Sigmoid colon (tissue), 7 donors: ENCODE measurements at regions of chr7 and their contacts with region 1.

Region 1: GRCh38 chr7:35624299-35625186 is 70.4 kb downstream of the HERPUD2 start:
- DNase-seq: no peak
- H3K4me3 ChIP-seq: no peak overlapping the region
- H3K27ac ChIP-seq: no peak overlapping the region
- H3K4me1 ChIP-seq: peaks cover 0 to 10% (median 4%) of the 10 kb centered on the region in 4 donors
- H3K27me3 ChIP-seq: no peaks in the 10 kb centered on the region
- CTCF ChIP-seq: peak; percentile 48 to 80 (median 62)
- EP300 ChIP-seq: no peak
- POLR2A ChIP-seq: no peak

Region 2: GRCh38 chr7:35424869-35425495 is 199.6 kb before region 1 on chr7:
- intact Hi-C with region 1: loop called (anchors 10 kb)
- DNase-seq: no peak
- H3K4me3 ChIP-seq: no peak overlapping the region
- H3K27ac ChIP-seq: no peak overlapping the region
- H3K4me1 ChIP-seq: peaks cover 0 to 3% (median 0%) of the 10 kb centered on the region in 4 donors
- H3K27me3 ChIP-seq: no peaks in the 10 kb centered on the region
- CTCF ChIP-seq: peak; percentile 11 to 55 (median 42)
- EP300 ChIP-seq: no peak
- POLR2A ChIP-seq: no peak

Region 3: GRCh38 chr7:35446091-35446490 is 178.5 kb before region 1 on chr7:
- intact Hi-C with region 1: no loop called
- DNase-seq: no peak
- H3K4me3 ChIP-seq: no peak overlapping the region
- H3K27ac ChIP-seq: no peak overlapping the region
- H3K4me1 ChIP-seq: no peaks in the 10 kb centered on the region
- H3K27me3 ChIP-seq: no peaks in the 10 kb centered on the region
- CTCF ChIP-seq: no peak
- EP300 ChIP-seq: no peak
- POLR2A ChIP-seq: no peak

Region 4: DNA sequence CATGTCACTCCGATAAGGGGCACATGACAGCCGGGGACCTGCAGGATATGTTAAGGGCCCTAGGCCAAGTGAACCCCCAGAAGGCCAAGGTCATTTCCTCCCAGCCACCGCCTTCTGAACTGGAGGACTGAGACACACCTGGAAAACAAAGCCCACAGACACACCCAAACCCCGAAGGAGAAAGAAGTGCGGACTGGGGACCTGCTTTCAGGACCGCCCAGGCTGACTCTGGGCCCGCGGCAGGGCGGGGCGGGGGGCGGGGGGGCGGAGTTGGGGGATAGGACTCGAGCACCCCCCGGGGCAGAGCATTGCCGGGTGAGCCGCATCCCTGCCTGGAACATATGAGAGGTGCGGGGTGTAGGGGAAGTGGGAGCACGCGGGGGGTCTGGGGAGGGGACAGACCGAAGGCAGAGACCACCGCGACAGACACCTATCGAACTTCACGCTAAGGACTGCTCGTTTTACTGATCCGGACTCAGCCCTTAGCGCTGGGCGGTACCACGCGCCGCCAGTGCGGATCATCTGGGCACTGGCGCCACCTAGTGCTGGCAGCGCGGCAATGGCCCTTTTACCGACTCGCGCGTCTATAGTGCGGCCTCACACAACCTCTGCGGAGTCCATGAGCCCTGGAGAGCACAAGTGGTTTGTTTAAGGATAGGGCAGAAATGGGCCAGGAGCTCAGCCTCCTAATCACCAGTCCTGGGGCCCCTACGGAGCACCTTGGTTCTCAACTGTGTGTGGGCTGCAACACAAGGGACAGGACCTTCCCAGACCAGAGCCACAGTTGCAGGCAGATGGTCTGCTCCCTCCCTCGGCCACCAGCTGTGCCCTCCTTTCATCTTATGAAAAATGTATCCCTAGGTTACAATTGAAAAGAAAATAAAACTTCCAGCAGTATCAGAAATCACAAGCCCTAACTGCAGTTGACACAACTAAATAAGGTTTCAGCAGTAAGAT is 87.2 kb before region 1 on chr7:
- intact Hi-C with region 1: loop called (anchors 10 kb)
- DNase-seq: peak; percentile 84
- H3K4me3 ChIP-seq: peak overlapping the region; percentile 18 to 47 (median 40)
- H3K27ac ChIP-seq: no peak overlapping the region
- H3K4me1 ChIP-seq: peaks cover 0 to 7% (median 3%) of the 10 kb centered on the region in 4 donors
- H3K27me3 ChIP-seq: no peaks in the 10 kb centered on the region
- CTCF ChIP-seq: peak; percentile 70 to 92 (median 76)
- EP300 ChIP-seq: no peak
- POLR2A ChIP-seq: no peak

Region 5: DNA sequence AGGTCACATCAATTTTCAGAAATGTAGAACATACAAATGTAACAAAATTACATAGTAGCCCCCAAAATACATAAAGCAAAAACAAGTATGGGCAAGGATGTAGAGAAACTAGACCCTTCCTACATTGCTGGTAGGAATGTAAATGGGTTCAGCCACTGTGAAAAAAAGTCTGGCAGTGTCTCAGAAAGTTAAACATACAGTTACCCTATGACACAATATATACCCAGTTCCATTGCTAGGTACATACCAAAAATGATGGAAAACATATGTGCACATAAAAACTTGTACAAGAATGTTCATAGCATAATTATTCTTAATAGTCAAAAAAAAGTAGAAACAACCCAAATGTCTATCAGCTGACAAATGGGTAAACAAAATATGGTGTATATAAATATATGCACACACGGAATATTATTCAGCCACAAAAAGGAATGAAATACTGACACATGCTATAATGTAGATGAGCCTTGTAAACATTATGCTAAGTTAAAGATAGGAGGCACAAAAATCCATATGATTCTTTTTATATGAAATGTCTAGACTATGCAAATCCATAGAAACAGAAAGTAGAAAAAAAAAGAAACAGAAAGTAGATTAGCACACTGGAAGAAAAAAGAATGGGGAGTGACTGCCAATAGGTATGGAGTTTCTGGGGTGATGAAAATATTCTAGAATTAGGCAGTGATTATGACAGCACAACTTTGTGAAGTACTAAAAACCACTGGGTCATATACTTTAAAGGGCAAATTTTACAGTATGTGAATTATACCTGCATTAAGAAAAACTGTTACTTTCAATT is 56.9 kb after region 1 on chr7:
- intact Hi-C with region 1: no loop called
- DNase-seq: no peak
- H3K4me3 ChIP-seq: no peak overlapping the region
- H3K27ac ChIP-seq: no peak overlapping the region
- H3K4me1 ChIP-seq: peaks cover 0 to 33% (median 19%) of the 10 kb centered on the region in 4 donors
- H3K27me3 ChIP-seq: no peaks in the 10 kb centered on the region
- CTCF ChIP-seq: no peak
- EP300 ChIP-seq: no peak
- POLR2A ChIP-seq: no peak

Region 6: GRCh38 chr7:35738889-35739288 is 114.3 kb after region 1 on chr7:
- intact Hi-C with region 1: no loop called
- DNase-seq: no peak
- H3K4me3 ChIP-seq: no peak overlapping the region
- H3K27ac ChIP-seq: no peak overlapping the region
- H3K4me1 ChIP-seq: peaks cover 0 to 6% (median 6%) of the 10 kb centered on the region in 4 donors
- H3K27me3 ChIP-seq: no peaks in the 10 kb centered on the region
- CTCF ChIP-seq: no peak
- EP300 ChIP-seq: no peak
- POLR2A ChIP-seq: no peak